ENCODE measurements at regions of chr18 and their contacts with region 1.

Region 1: DNA sequence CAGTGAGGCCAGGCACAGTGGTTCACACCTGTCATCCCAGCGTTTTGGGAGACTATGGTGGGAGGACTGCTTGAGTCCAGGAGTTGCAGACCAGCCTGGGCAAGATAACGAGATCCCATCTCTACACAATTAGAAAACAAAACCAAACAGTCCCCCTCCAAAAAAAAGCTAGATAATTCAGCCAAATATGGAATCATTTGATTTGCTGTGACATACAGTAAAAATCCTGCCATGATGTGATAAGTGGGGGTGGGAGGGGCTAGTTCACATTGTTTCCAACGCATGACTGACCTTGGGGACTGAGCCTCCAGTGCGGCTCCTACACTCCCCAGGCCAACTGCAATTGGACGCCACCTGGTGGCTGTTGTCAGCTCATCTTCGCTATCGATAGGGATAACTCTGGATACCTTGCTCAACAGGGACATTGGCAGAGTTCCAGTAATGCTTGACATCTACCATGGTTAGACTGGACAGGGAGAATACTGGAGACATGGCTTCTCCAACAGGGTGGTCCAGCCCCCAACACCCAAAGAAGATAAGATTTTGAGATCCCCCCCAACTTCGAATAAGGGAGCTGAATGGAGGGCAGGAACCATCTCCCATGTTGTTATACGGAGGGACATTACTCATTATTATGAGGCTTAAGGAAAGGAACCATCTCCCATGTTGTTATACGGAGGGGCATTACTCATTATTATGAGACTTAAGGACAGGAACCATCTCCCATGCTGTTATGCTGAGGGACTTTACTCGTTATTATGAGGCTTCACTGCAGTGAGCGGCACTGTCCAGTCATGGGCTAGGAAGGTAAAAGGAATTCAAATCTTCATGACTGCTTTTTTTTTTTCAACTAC is 135.9 kb downstream of the TGIF1 start:
- DNase-seq: peak; percentile 62
- H3K4me3 ChIP-seq: no peak overlapping the region
- CTCF ChIP-seq: peak; percentile 77

Region 2: DNA sequence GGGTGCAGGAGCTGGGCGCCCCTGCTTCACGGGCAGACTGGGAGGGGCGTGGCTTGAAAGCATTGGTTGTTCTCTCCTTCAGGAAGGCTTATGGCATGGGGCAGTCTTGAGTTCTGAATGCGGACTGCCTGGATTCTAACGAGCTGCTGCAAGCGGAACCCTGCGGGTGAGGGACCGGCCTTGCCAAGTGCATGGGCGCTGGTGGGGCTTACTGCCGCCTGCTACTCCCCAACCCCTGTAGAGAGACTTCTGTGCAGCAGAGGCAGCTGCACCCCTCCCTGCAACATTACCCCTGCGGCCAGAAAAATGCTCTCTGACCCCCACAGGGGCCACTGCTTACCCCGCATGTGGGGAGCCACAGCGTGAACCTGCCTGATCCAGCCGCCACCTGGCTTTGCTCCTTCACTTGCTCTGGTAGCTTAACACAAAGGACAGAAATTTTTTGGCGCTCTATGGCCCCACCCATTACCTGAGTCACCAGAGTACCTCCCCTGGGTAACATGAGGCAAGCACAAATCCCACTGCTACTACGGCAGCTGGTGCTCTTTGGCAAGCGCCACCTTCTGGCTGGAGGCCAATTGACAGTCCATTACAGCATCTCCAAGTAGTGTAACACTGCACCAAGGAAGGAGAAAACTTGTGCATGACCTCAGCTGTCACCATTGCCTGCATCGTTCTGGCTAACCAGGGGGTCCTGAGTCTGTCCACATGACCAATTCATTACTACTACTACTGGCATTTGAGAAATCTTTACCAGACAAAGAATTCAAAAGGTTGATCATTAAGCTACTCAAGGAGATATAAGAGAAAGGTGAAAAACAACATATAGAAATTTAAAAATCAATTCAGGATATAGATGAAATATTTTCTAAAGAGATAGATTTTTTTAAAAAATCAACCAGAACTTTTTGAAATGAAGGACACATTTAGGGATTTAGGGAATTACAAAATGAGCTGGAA is 288.6 kb before region 1 on chr18:
- in situ Hi-C with region 1: loop called (anchors 10 kb)
- DNase-seq: peak; percentile 74
- H3K4me3 ChIP-seq: peak overlapping the region; percentile 65
- CTCF ChIP-seq: peak; percentile 51

Region 3: GRCh38 chr18:3525870-3526420 is 59.9 kb before region 1 on chr18:
- in situ Hi-C with region 1: no loop called
- DNase-seq: no peak
- H3K4me3 ChIP-seq: no peak overlapping the region
- CTCF ChIP-seq: no peak

Region 4: GRCh38 chr18:3547891-3548615 is 37.8 kb before region 1 on chr18:
- in situ Hi-C with region 1: no loop called
- DNase-seq: no peak
- H3K4me3 ChIP-seq: no peak overlapping the region
- CTCF ChIP-seq: no peak

Region 5: GRCh38 chr18:3665780-3666525 is 80.1 kb after region 1 on chr18:
- in situ Hi-C with region 1: no loop called
- DNase-seq: peak; percentile 86
- H3K4me3 ChIP-seq: peak overlapping the region; percentile 1
- CTCF ChIP-seq: peak; percentile 93